Posterior vena cava (tissue), 2 donors: ENCODE measurements at regions of chr17 and their contacts with region 1.

Region 1: DNA sequence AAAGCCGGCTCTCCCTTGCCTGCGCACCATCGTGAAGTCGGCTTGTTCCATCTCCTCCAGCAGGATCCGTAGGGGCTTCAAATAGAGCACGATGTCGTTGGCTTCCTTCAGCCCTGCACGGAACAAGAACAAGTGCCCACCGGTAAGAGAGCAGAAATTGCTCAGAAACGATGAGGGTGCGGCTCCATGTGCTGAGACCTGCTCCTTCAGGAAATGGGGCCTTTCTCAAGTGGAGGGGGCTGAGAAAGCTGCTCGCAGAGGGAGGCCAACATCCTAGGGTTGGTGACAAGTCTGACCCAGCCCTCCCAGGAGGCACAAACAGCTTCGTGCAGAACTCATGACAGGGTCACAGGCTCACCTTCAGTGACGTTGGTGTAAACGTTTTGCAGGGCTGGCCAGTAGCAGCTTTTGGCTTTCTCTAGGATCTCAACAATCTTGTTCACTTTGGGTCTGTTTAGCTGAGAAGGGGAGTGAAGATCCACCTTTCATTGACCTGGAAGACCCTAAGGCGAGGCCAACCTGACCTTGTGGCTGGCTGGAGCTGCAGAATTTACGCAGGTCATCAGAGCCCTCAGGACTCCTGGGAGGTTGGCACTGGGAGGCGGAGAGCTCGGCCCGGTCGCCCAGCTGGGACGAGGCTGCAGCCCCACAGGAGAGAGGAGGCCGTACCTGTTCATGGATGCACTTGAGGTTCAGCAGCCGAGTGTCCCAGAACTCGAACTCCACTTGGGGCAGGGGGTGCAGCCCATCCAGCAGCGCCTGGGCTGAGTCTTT is 6.1 kb downstream of the DNAH17 start:
- DNase-seq: no peak

Region 2: GRCh38 chr17:78588258-78589030 is 17.3 kb after region 1 on chr17:
- intact Hi-C with region 1: no loop called
- DNase-seq: no peak

Region 3: DNA sequence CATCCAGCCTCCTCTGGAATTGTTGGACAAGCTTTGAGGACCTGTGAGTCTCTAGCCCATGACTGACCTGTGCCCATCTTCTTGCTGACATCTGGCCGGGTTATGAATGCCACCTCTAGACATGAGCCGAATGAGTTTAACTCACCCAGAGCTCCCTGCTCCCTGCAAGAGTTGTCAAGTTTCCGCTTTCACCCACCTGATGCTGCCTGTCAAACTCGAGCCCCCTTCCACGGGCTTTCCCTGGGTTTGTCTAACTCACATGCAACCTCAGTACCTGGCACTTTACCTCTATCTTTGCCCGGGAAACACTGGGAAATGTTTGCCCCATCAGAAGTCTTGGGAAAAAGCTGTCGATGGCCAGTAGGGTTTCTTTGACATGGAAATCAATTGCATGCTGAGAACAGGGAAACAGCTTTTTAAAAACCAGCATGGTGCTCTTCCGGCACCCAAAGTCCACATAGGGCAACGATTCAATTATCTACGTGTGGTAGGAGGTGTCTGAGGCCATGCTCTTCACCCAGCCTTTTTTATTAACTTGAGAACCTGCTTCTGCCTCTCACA is 39.9 kb after region 1 on chr17:
- intact Hi-C with region 1: loop called in 1 of 2 experiments (anchors 1 kb)
- DNase-seq: no peak

Region 4: DNA sequence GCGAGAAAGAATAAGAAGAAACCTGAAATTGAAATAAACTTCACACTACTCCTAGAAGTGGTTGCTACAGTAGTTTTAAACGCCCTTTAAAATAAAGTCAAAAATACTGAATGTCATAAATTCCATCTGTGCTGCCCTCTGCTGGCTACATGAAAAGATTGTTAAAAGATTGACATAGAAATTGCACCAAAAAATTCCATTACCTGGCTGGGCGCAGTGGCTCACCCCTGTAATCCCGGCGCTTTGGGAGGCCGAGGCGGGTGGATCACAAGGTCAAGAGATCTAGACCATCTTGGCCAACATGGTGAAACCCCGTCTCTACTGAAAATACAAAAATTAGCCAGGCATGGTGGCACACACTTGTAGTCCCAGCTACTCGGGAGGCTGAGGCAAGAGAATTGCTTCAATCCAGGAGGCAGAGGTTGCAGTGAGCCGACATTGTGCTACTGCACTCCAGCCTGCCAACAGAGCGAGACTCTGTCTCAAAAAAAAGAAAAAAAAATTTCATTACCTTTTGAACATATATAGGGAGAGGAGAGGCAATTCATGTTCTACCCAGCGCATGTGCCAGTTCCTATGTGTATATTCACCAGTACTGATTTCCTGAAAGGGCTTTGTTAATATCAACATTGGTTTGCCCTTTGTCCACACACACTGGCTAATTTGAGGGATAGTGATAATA is 174.4 kb after region 1 on chr17:
- intact Hi-C with region 1: no loop called
- DNase-seq: no peak